ENCODE measurements at regions of chrX and their contacts with region 1.

Region 1: GRCh38 chrX:51336584-51336983 is 4.0 kb downstream of the NUDT10 start:
- DNase-seq: peak; percentile 10
- ATAC-seq: peak; percentile 44
- H3K4me3 Mint-ChIP-seq: no peak overlapping the region
- H3K27ac Mint-ChIP-seq: no peak overlapping the region
- H3K4me1 Mint-ChIP-seq: peaks cover 22% of the 10 kb centered on the region
- H3K27me3 Mint-ChIP-seq: 0 out of 2 replicates have a peak, but pooled peaks cover 3% of the 10 kb centered on the region
- CTCF ChIP-seq: no peak; the same call in 1 of the 2 replicates

Region 2: GRCh38 chrX:51272638-51273037 is 63.9 kb before region 1 on chrX:
- CTCF ChIA-PET with region 1: no interaction called
- POLR2A ChIA-PET with region 1: no interaction called
- DNase-seq: no peak
- ATAC-seq: no peak
- H3K4me3 Mint-ChIP-seq: no peak overlapping the region
- H3K27ac Mint-ChIP-seq: no peak overlapping the region
- H3K4me1 Mint-ChIP-seq: no peaks in the 10 kb centered on the region
- H3K27me3 Mint-ChIP-seq: no peaks in the 10 kb centered on the region
- CTCF ChIP-seq: no peak

Region 3: GRCh38 chrX:51395810-51396728 is 59.5 kb after region 1 on chrX:
- CTCF ChIA-PET with region 1: interaction called, 13 read pairs
- POLR2A ChIA-PET with region 1: no interaction called
- DNase-seq: peak; percentile 40
- ATAC-seq: peak; percentile 93
- H3K4me3 Mint-ChIP-seq: peak overlapping the region; percentile 74
- H3K27ac Mint-ChIP-seq: no peak overlapping the region
- H3K4me1 Mint-ChIP-seq: 0 out of 2 replicates have a peak, but pooled peaks cover 5% of the 10 kb centered on the region
- H3K27me3 Mint-ChIP-seq: no peaks in the 10 kb centered on the region
- CTCF ChIP-seq: peak; percentile 36; the same call in 1 of the 2 replicates